ENCODE measurements at regions of chr20 and their contacts with region 1.

Region 1: DNA sequence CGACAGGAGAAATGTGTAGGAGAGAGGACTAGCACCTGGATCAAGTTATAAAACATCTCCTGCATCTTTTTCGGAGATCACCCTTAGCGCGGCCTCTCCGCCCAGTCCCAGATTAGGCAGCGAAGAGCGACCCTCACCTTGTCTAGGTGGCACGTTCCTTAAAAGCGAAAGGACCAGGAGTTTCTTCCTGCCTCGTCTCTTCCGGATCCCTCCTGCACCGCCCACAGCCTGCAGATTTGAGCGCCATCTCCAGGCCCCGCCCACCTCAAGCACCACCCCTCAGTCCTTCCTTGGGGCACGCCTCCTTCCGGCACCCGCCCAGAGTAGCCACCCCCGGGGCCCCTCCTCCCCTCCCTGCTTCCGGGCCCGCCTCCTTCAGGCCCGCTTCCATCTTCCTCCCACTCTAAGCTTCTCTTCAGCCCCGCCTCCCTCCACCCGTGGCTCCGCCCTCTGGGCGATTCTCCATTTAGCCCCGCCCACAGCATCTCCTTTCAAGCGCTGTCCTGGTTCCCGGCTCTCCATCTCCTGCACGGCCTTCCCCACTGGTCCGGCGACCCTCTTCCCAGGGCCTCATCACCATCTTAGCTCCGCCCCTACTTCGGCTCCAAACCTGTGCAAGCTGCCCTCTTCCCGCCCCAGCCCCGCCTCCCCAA is 662 bp upstream of the RALY start:
- DNase-seq: peak; percentile 99
- ATAC-seq: peak; percentile 84 to 86
- H3K4me3 ChIP-seq: peak overlapping the region; percentile 80 to 99 (median 97)
- H3K27ac ChIP-seq: peak overlapping the region; percentile 94 to 99 (median 98)
- H3K4me1 ChIP-seq: peaks cover 40 to 42% of the 10 kb centered on the region in 2 donors
- H3K27me3 ChIP-seq: no peaks in the 10 kb centered on the region
- CTCF ChIP-seq: no peak
- POLR2A ChIP-seq: peak; percentile 57 to 61

Region 2: DNA sequence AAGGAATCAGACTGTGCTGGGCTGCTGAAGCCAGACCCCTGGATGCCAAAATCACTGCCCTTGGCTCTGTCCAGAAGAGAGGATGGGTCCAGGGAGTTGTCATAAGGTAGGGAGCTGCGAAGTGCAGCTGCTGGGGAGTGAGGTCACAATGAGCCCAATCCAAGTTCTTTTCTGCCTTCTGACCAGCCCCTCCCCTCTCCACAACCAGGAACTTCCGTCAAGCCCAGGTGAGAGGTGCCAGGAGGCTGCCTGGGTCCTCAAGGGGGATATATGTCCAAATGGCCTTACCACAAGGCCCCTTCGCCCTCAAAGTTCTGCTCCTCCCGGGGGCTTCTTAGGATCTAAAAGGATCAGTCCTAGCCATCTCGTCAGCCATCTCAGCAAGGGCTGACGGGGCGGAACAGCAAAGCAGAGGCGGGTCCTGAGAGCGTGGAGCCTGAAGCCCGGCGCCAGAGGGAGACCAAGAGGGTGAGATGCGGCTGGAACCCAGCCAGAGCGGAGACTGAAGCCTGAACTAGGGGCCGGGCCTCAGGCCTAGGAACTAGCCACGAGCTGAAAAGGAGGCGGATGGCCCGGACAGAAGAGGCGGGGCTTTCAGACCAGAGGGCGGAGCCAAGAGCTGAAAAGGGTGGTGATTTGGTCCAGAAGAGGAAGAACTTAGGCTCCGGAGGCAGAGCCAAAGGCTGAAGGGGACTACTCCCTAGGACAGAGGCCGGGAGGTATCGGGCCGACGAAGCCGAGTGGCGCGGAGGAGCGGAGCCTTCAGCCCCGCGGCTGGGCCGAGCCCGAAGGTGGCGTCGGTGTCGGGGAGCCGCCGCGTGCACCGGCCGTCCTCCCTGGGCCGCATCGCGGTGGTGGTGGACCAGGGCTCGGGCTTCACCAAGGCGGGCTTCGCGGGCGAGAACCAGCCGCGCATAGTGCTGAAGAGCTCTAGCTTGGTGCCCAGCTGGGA is 326.5 kb before region 1 on chr20 and contains the start of gene ACTL10:
- in situ Hi-C with region 1: no loop called
- intact Hi-C with region 1: loop called (anchors 10 kb)
- DNase-seq: peak; percentile 85 to 93
- ATAC-seq: peak; percentile 75 to 89
- H3K4me3 ChIP-seq: peak within 1 kb of the TSS; percentile 65 to 78 (median 72)
- H3K27ac ChIP-seq: peak within 1 kb of the TSS; percentile 63 to 83 (median 77)
- H3K4me1 ChIP-seq: peaks cover 14 to 20% of the 10 kb centered on the region in 2 donors
- H3K27me3 ChIP-seq: no peaks in the 10 kb centered on the region
- CTCF ChIP-seq: peak in 1 of 5 experiments; percentile 26
- POLR2A ChIP-seq: peak; percentile 58 to 83
- total RNA-seq, gene ACTL10: 0.22 to 0.39 TPM in 2 of 4 donors, not detected in the others

Region 3: DNA sequence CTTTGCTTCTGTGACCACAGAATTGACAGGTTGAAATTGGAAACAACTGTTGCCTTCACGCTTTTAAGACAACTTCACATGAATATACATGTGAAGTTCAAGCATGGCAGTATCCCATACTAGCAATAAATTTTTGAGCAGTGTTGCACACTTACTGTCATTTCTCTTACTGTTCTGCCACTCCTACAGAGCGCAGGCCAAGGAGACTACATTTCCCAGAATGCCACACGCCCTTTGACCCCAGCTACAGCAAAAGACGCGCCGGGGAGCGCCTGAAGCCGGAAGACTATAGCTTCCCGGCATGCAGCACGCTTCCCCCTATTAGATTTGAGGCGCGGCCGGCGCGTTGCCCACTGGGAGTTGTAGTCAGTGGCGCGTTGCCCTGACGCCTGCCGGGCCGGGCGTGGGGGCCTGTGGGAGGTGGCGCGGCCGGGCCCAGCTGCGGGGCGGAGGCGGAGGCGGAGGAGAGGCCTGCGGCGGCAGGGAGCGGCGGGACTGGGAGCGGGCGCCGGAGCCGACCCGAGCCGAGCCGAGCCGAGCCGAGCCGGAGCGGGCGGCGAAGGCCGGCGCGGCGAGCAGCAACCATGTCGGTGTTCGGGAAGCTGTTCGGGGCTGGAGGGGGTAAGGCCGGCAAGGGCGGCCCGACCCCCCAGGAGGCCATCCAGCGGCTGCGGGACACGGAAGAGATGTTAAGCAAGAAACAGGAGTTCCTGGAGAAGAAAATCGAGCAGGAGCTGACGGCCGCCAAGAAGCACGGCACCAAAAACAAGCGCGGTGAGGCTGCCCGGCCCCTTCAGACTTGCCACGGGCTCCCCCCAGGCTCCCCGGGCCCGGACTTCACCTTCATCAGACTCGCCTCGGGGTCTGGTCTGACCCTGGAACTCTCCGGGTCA is 181.9 kb before region 1 on chr20 and contains the start of gene CHMP4B:
- in situ Hi-C with region 1: no loop called
- intact Hi-C with region 1: loop called (anchors 1 kb)
- DNase-seq: peak; percentile 99
- ATAC-seq: peak; percentile 90 to 92
- H3K4me3 ChIP-seq: peak within 1 kb of the TSS; percentile 85 to 98 (median 96)
- H3K27ac ChIP-seq: peak within 1 kb of the TSS; percentile 86 to 100 (median 98)
- H3K4me1 ChIP-seq: peaks cover 33 to 34% of the 10 kb centered on the region in 2 donors
- H3K27me3 ChIP-seq: no peaks in the 10 kb centered on the region
- CTCF ChIP-seq: peak in 1 of 5 experiments; percentile 18
- POLR2A ChIP-seq: peak; percentile 98
- total RNA-seq, gene CHMP4B: 57.4 to 109 (median 82.7) TPM

Region 4: DNA sequence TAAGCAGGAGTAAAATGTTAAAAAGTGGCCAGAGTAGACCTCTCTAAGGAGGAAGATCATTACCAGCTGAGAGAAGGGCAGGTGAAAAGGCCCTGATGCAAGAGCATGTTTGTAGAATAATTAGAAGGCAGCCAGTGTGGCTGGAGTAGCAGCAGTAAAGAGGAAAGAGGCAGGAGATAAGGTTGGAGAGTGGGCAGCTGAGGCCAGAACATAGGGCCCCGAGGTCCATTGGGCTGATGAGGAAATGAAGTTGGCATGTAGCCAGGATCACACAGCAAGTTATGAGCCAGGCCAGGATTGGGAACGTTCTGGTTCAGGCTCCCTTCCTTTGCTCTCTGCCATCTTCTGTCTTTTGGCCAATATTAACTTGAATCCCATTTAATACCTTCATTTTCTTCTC is 52.2 kb after region 1 on chr20:
- in situ Hi-C with region 1: loop called in 1 of 4 experiments (anchors 10 kb)
- intact Hi-C with region 1: loop called (anchors 1 kb)
- DNase-seq: peak; percentile 28 to 35
- ATAC-seq: no peak
- H3K4me3 ChIP-seq: no peak overlapping the region
- H3K27ac ChIP-seq: peak overlapping the region in 2 of 4 donors; percentile 3 to 26
- H3K4me1 ChIP-seq: peaks cover 71 to 87% of the 10 kb centered on the region in 2 donors
- H3K27me3 ChIP-seq: no peaks in the 10 kb centered on the region
- CTCF ChIP-seq: no peak
- POLR2A ChIP-seq: no peak

Region 5: GRCh38 chr20:34083137-34083536 is 90.1 kb after region 1 on chr20:
- in situ Hi-C with region 1: loop called in 1 of 4 experiments (anchors 10 kb)
- intact Hi-C with region 1: no loop called
- DNase-seq: peak; percentile 85 to 88
- ATAC-seq: peak; percentile 82 to 86
- H3K4me3 ChIP-seq: no peak overlapping the region
- H3K27ac ChIP-seq: peak overlapping the region; percentile 58 to 75 (median 72)
- H3K4me1 ChIP-seq: peaks cover 19 to 23% of the 10 kb centered on the region in 2 donors
- H3K27me3 ChIP-seq: no peaks in the 10 kb centered on the region
- CTCF ChIP-seq: peak in 2 of 5 experiments; percentile 15 to 26
- POLR2A ChIP-seq: no peak

Region 6: DNA sequence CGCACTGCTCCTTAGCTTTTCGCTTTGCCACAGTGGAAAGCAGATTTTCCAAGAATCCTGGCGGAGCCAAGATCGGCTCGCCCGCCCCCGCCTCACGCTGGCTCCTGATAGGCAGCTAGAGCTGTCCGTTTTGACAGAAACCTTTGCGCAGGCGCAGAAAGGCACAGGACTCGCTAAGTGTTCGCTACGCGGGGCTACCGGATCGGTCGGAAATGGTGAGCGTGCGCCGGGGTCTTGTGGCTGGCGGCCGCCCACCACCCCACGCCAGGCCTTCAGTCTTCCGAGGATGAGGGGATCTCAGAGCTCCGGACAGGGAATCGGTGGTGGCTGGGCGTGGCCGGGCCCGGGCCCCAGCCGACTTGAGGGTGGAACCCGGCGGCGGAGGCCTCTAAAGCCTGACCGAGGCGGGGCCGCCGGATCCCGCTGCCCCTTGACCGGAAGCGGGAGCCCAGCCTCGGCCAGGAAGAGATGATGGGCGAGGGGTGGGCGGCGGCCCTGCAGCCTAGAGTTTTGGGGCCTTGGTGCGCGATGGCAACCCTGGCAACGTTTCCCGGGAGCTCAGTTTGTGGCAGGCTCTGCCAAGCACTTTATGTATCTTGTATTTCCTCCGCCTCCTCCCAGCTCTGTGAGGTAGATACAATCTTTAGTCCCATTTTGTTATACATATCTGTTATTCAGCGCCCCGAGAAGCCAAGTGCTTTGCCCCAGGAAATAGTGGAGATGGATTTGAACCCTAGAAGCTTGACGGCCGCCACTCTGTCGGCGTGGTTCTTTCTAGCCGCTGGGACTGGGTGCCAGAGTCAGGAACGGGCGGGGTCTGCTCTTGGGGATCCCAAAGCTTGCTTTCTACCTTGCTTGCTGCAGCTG is 523.4 kb after region 1 on chr20 and contains the start of gene DYNLRB1:
- in situ Hi-C with region 1: no loop called
- intact Hi-C with region 1: loop called (anchors 5 kb)
- DNase-seq: peak; percentile 94 to 96
- ATAC-seq: peak; percentile 97 to 98
- H3K4me3 ChIP-seq: peak within 1 kb of the TSS; percentile 71 to 92 (median 78)
- H3K27ac ChIP-seq: peak within 1 kb of the TSS; percentile 88 to 96 (median 94)
- H3K4me1 ChIP-seq: peaks cover 39 to 41% of the 10 kb centered on the region in 2 donors
- H3K27me3 ChIP-seq: no peaks in the 10 kb centered on the region
- CTCF ChIP-seq: no peak
- POLR2A ChIP-seq: peak; percentile 78 to 85
- total RNA-seq, gene DYNLRB1: 115 to 216 (median 142) TPM

Region 7: GRCh38 chr20:34907616-34908469 is 914.8 kb after region 1 on chr20:
- in situ Hi-C with region 1: no loop called
- intact Hi-C with region 1: no loop called
- DNase-seq: peak; percentile 56 to 69
- ATAC-seq: peak; percentile 88 to 97
- H3K4me3 ChIP-seq: no peak overlapping the region
- H3K27ac ChIP-seq: peak overlapping the region; percentile 79 to 89 (median 87)
- H3K4me1 ChIP-seq: peaks cover 35 to 41% of the 10 kb centered on the region in 2 donors
- H3K27me3 ChIP-seq: no peaks in the 10 kb centered on the region
- CTCF ChIP-seq: no peak
- POLR2A ChIP-seq: peak in 1 of 2 donors; percentile 16